Naive thymus-derived CD4-positive, alpha-beta T cell (primary cell): ENCODE measurements at regions of chr7 and their contacts with region 1.

Region 1: GRCh38 chr7:5494683-5495561 is 71.3 kb upstream of the TNRC18 start:
- DNase-seq: peak; percentile 64 to 82 (median 78)
- ATAC-seq: peak; percentile 94
- H3K4me3 ChIP-seq: peak overlapping the region; percentile 4
- H3K4me3 Mint-ChIP-seq: peak overlapping the region; percentile 14 to 67 (median 58)
- H3K27ac ChIP-seq: no peak overlapping the region
- H3K27ac Mint-ChIP-seq: peak overlapping the region in 6 of 9 donors; percentile 8 to 65 (median 47)
- H3K4me1 ChIP-seq: peaks cover 4 to 22% of the 10 kb centered on the region in 2 donors
- H3K4me1 Mint-ChIP-seq: peaks cover 16 to 37% (median 22%) of the 10 kb centered on the region in 7 donors
- H3K27me3 ChIP-seq: no peaks in the 10 kb centered on the region
- H3K27me3 Mint-ChIP-seq: no peaks in the 10 kb centered on the region

Region 2: GRCh38 chr7:5462216-5462615 is 32.7 kb before region 1 on chr7:
- CTCF ChIA-PET with region 1: no interaction called
- POLR2A ChIA-PET with region 1: no interaction called
- intact Hi-C with region 1: no loop called
- DNase-seq: peak in 4 of 9 donors; percentile 6 to 19 (median 12)
- ATAC-seq: peak; percentile 54
- H3K4me3 ChIP-seq: no peak overlapping the region
- H3K4me3 Mint-ChIP-seq: peak overlapping the region in 7 of 10 donors; percentile 16 to 56 (median 35)
- H3K27ac ChIP-seq: no peak overlapping the region
- H3K27ac Mint-ChIP-seq: no peak overlapping the region
- H3K4me1 ChIP-seq: no peaks in the 10 kb centered on the region
- H3K4me1 Mint-ChIP-seq: peaks cover 0 to 7% (median 0%) of the 10 kb centered on the region in 7 donors
- H3K27me3 ChIP-seq: no peaks in the 10 kb centered on the region
- H3K27me3 Mint-ChIP-seq: peaks cover 0 to 5% (median 4%) of the 10 kb centered on the region in 5 donors

Region 3: DNA sequence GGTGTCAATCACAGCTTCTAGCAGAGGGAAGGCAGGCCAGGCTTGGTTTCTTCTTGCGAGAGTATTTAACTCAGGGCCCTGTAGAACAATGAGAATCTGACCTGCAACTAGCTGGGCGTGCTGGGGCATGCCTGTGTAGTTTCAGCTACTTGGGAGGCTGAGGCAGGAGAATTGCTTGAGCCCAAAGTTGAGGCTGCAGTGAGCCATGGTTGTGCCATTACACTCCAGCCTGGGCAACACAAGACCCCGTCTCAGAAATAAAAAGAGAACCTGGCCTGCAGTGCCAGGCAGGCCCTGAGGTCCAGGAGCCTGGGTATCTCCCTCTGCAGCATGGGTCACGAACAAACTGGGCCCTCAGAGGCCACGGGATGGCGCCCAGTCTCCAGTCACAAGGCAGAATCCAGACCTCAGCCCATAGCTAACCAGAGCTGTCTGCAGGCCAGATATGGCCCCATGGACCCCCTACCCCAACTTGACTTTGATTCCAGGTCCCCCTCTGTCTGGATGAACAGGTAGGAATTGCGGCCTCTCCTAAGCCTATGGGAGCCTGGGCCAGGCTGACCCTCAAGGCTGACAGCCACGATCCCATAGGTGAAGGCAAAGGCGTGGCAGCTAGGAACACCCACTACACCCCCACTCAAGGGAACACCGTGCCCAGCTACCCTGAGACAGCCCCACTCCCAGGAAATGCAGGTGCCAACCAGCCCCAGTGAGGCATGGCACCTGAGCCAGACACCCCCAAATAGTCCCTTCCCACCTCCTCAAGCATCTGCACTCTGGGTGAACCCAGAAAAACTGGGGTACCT is 31.4 kb after region 1 on chr7:
- CTCF ChIA-PET with region 1: interaction called, 6 read pairs
- POLR2A ChIA-PET with region 1: interaction called, 13 read pairs
- intact Hi-C with region 1: no loop called
- DNase-seq: peak in 5 of 9 donors; percentile 10 to 41 (median 35)
- ATAC-seq: no peak
- H3K4me3 ChIP-seq: peak overlapping the region; percentile 86
- H3K4me3 Mint-ChIP-seq: peak overlapping the region; percentile 97 to 100 (median 99)
- H3K27ac ChIP-seq: peak overlapping the region; percentile 99
- H3K27ac Mint-ChIP-seq: peak overlapping the region; percentile 87 to 99 (median 98)
- H3K4me1 ChIP-seq: peaks cover 3 to 8% of the 10 kb centered on the region in 2 donors
- H3K4me1 Mint-ChIP-seq: peaks cover 33 to 51% (median 38%) of the 10 kb centered on the region in 7 donors
- H3K27me3 ChIP-seq: no peaks in the 10 kb centered on the region
- H3K27me3 Mint-ChIP-seq: peaks cover 0 to 18% (median 0%) of the 10 kb centered on the region in 5 donors

Region 4: DNA sequence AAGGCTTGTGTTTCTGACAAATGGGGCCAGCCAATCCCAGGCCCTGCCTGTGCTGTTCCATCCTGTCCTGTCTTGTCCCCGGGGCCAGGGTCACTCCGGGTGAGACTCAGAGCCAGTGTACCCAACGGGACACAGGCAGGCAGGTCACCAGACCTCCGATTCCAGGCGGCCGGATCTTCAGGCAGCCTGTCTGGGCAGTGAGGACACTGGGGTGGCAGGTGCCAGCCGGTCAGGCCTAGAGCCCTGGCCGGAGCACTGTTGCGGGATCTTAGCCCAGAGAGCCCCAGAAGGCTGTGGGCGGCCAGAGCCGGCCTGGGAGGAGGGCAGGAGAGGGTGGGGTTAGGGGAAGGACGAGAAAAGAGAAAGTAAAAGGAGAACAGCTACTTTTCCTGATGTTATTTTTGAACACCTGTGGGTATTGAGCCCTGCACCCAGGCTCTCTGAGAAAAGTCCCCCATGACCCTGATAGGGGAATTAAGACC is 63.0 kb after region 1 on chr7:
- CTCF ChIA-PET with region 1: no interaction called
- POLR2A ChIA-PET with region 1: interaction called, 17 read pairs
- intact Hi-C with region 1: loop called (anchors 1 kb)
- DNase-seq: peak in 3 of 9 donors; percentile 14 to 41 (median 23)
- ATAC-seq: no peak
- H3K4me3 ChIP-seq: peak overlapping the region; percentile 57
- H3K4me3 Mint-ChIP-seq: peak overlapping the region; percentile 82 to 91 (median 88)
- H3K27ac ChIP-seq: peak overlapping the region; percentile 85
- H3K27ac Mint-ChIP-seq: peak overlapping the region; percentile 78 to 97 (median 93)
- H3K4me1 ChIP-seq: peaks cover 39 to 47% of the 10 kb centered on the region in 2 donors
- H3K4me1 Mint-ChIP-seq: peaks cover 19 to 48% (median 41%) of the 10 kb centered on the region in 7 donors
- H3K27me3 ChIP-seq: peaks cover 0 to 4% of the 10 kb centered on the region in 2 donors
- H3K27me3 Mint-ChIP-seq: peaks cover 0 to 13% (median 0%) of the 10 kb centered on the region in 5 donors

Region 5: DNA sequence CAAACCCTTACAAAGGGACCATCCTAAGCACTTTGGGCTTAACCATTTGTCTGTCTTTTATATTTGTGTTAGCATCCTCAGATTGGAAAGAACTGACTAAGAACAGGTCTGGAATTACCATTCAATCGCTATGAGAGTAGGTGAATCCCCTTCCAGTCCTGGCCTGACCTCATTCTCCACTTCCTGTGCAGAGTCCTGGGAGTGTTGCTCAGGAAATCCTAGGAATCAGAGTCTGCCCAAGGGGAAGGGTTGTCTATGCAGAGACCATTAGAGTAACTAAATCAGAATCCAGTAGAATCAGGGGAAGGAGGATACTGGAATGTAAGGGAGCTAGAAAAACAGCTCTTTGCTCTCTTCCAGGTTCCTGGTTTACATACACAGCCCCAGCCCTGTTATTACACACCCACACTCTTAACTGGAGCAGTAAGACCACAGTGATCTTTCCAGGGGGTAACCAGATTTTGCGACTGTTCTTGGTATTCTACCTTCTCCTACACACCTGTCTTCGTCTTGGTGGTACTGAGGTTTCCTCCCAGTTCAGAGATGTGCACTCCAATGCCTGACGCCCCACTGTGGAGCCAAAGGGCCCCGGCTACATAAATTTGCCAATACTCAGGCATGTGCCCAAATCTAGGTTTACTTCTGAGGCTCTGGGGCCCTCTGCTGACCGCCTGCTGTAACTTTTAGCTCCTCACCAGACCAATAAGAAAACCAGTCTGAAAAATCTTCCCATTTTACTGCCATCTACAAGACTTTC is 182.8 kb after region 1 on chr7:
- CTCF ChIA-PET with region 1: interaction called, 6 read pairs
- POLR2A ChIA-PET with region 1: interaction called, 3 read pairs
- intact Hi-C with region 1: loop called in 1 of 2 experiments (anchors 1 kb)
- DNase-seq: peak in 3 of 9 donors; percentile 34 to 47 (median 42)
- ATAC-seq: peak; percentile 67
- H3K4me3 ChIP-seq: no peak overlapping the region
- H3K4me3 Mint-ChIP-seq: peak overlapping the region in 1 of 10 donors; percentile 1
- H3K27ac ChIP-seq: no peak overlapping the region
- H3K27ac Mint-ChIP-seq: peak overlapping the region in 7 of 9 donors; percentile 2 to 68 (median 34)
- H3K4me1 ChIP-seq: peaks cover 5 to 14% of the 10 kb centered on the region in 2 donors
- H3K4me1 Mint-ChIP-seq: peaks cover 40 to 68% (median 57%) of the 10 kb centered on the region in 7 donors
- H3K27me3 ChIP-seq: no peaks in the 10 kb centered on the region
- H3K27me3 Mint-ChIP-seq: no peaks in the 10 kb centered on the region

Region 6: DNA sequence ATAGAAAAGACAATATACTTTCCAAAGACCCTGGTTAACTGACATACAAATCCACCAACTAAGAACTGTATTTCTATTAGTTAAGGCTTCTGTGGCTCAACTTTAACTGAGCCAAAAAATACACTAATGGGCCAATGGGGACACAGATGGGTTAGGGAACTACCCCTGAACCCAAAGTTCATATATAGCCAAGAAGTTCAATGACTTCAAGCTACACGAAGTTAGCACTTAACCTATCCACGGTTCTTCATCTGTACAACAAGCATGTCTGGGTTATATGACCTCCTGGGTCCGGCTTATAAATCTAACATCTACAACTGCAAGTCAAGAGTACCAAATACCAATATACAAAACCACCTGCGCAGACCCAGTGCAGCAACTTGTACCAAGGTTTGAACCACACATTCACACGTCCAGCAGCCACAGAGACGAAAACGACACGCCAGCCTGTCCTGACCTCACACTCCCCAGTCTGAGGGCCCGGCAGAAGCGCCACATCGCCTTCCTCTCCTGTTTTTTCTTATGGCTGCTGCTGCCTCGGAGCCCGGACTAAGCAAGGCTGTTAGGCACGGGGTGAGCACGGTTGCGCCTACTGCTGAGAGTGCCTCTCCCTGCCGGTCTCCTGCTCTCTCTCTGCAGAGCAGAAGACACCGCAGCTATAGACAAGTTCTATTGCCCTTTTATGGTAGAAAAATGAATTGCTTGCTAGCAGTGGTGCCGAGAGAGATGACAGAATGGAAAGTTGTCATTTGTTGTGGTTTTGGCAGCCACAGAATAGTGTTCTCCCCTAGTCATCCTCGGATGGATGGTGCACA is 200.2 kb after region 1 on chr7:
- CTCF ChIA-PET with region 1: interaction called, 18 read pairs
- POLR2A ChIA-PET with region 1: interaction called, 3 read pairs
- intact Hi-C with region 1: loop called in 1 of 2 experiments (anchors 2 kb)
- DNase-seq: peak; percentile 38 to 91 (median 81)
- ATAC-seq: peak; percentile 75
- H3K4me3 ChIP-seq: peak overlapping the region; percentile 60
- H3K4me3 Mint-ChIP-seq: peak overlapping the region; percentile 88 to 99 (median 96)
- H3K27ac ChIP-seq: peak overlapping the region; percentile 86
- H3K27ac Mint-ChIP-seq: peak overlapping the region; percentile 89 to 99 (median 94)
- H3K4me1 ChIP-seq: peaks cover 45 to 88% of the 10 kb centered on the region in 2 donors
- H3K4me1 Mint-ChIP-seq: peaks cover 84 to 100% (median 93%) of the 10 kb centered on the region in 7 donors
- H3K27me3 ChIP-seq: no peaks in the 10 kb centered on the region
- H3K27me3 Mint-ChIP-seq: peaks cover 0 to 10% (median 0%) of the 10 kb centered on the region in 5 donors

Region 7: DNA sequence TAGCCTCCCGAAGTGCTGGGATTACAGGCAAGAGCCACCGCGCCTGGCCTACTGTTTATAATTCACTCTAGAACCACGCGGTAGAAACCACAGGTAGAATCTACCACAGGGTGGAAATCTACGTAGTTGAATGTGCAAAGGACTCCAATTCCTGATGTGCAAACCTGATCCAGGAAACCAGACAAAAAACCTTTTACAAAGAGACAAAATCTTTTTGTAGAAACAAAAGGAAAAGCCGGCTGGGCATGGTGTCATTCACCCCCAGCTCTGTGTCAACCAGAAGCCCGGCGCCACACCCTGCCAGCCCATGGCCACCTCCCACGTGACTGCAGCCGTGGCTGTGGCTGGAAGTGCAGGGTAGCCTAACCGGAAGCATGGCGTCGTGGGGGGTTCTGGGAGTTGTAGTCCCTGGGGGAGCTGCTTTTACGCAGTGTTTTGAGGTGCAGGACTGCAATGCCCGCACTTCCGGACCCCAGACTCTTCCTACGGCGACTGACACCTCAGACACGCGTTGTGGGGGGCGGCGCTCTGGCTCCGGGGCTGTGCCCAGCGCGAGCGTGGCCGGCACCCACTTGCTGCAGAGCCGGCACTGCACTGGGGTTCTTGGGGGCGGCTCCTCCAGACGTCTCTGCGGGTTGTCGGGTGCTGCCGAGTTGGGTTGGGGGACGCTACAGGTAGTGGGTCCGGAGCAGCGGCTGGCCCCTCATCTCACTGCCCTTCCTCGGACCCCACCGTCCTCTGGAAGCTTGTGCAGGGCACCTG is 328.0 kb after region 1 on chr7:
- CTCF ChIA-PET with region 1: interaction called, 3 read pairs
- POLR2A ChIA-PET with region 1: no interaction called
- intact Hi-C with region 1: loop called in 1 of 2 experiments (anchors 5 kb)
- DNase-seq: peak; percentile 88 to 99 (median 99)
- ATAC-seq: peak; percentile 95
- H3K4me3 ChIP-seq: peak overlapping the region; percentile 95
- H3K4me3 Mint-ChIP-seq: peak overlapping the region; percentile 74 to 94 (median 88)
- H3K27ac ChIP-seq: peak overlapping the region; percentile 86
- H3K27ac Mint-ChIP-seq: peak overlapping the region; percentile 82 to 97 (median 93)
- H3K4me1 ChIP-seq: peaks cover 15% of the 10 kb centered on the region in 2 donors
- H3K4me1 Mint-ChIP-seq: peaks cover 15 to 43% (median 23%) of the 10 kb centered on the region in 7 donors
- H3K27me3 ChIP-seq: no peaks in the 10 kb centered on the region
- H3K27me3 Mint-ChIP-seq: no peaks in the 10 kb centered on the region